ENCODE measurements at regions of chr20 and their contacts with region 1.

Region 1: GRCh38 chr20:45293041-45294002 is 13.3 kb upstream of the RBPJL start:
- DNase-seq: peak; percentile 89
- H3K4me3 ChIP-seq: peak overlapping the region; percentile 36 to 60 (median 50)
- H3K27ac ChIP-seq: peak overlapping the region; percentile 36 to 65 (median 48)
- H3K4me1 ChIP-seq: peaks cover 0 to 18% (median 10%) of the 10 kb centered on the region in 4 donors
- H3K27me3 ChIP-seq: peaks cover 21% of the 10 kb centered on the region
- CTCF ChIP-seq: peak; percentile 88 to 99 (median 97)
- EP300 ChIP-seq: no peak
- POLR2A ChIP-seq: no peak

Region 2: GRCh38 chr20:45011108-45011526 is 282.2 kb before region 1 on chr20:
- in situ Hi-C with region 1: loop called in 1 of 4 experiments (anchors 25 kb)
- intact Hi-C with region 1: no loop called
- DNase-seq: peak; percentile 65
- H3K4me3 ChIP-seq: no peak overlapping the region
- H3K27ac ChIP-seq: no peak overlapping the region
- H3K4me1 ChIP-seq: peaks cover 2 to 35% (median 4%) of the 10 kb centered on the region in 4 donors
- H3K27me3 ChIP-seq: no peaks in the 10 kb centered on the region
- CTCF ChIP-seq: peak; percentile 53 to 61 (median 60)
- EP300 ChIP-seq: no peak
- POLR2A ChIP-seq: no peak

Region 3: DNA sequence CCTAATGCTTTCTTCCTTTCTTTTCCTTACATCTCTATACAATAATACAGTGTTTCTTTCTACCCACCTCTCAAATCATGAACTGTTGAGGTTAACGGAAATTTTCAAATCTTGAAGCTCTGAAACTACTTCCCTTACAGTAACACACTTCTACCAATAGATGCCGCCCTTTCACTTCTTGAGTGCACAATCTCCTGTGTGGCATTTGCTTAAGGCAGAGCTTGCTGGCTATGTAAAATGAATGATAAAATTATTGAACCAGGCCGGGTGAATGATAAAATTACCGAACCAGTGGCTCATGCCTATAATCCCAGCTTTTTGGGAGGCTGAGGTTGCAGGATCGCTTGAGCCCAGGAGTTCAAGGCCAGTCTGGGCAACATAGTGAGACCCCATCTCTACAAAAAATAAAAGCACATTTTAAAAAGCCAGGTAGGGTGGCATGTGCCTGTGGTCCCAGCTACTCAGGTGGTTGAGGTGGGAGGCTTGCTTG is 249.2 kb before region 1 on chr20:
- in situ Hi-C with region 1: loop called in 1 of 4 experiments (anchors 25 kb)
- intact Hi-C with region 1: no loop called
- DNase-seq: peak; percentile 15
- H3K4me3 ChIP-seq: no peak overlapping the region
- H3K27ac ChIP-seq: no peak overlapping the region
- H3K4me1 ChIP-seq: peaks cover 3 to 27% (median 7%) of the 10 kb centered on the region in 4 donors
- H3K27me3 ChIP-seq: no peaks in the 10 kb centered on the region
- CTCF ChIP-seq: peak; percentile 74 to 86 (median 78)
- EP300 ChIP-seq: no peak
- POLR2A ChIP-seq: no peak

Region 4: DNA sequence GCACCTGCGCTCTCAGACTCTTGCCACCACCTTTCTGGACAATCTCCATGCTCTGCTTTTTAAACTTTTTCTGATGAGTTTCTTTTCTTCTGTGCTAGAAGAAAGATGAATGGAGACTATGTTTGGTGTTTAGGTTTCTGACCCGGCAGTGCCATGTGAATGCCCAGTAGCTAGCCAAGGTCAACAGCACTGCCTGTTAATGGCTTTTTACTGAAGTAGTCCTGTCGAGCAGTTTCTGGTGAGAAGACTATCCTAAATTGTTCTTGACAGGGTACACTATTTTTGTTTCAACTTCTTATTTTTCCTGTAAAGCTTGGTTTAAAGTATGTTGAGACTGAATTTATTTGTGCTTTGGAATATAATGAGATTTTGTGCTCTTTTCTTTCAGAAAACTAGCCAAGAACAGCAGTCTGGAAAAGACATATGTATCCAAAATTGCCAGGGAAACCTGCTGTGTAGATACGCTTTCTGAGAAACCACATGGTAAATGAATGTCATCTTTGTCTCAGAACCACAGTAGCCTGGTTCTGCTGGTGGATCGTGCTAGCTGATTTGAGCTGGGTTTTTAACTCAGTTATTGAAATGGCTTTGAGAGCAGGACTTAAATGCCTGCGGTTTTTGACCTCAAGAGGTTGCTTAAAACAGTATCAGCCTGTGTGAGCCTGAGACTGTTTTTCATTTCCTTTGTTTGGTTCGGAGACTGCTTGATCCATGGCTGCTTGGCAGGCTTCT is 240.5 kb before region 1 on chr20:
- in situ Hi-C with region 1: loop called in 1 of 4 experiments (anchors 25 kb)
- intact Hi-C with region 1: loop called (anchors 10 kb)
- DNase-seq: no peak
- H3K4me3 ChIP-seq: no peak overlapping the region
- H3K27ac ChIP-seq: peak overlapping the region in 3 of 4 donors; percentile 20 to 37 (median 37)
- H3K4me1 ChIP-seq: peaks cover 0 to 38% (median 8%) of the 10 kb centered on the region in 4 donors
- H3K27me3 ChIP-seq: no peaks in the 10 kb centered on the region
- CTCF ChIP-seq: no peak
- EP300 ChIP-seq: no peak
- POLR2A ChIP-seq: no peak

Region 5: DNA sequence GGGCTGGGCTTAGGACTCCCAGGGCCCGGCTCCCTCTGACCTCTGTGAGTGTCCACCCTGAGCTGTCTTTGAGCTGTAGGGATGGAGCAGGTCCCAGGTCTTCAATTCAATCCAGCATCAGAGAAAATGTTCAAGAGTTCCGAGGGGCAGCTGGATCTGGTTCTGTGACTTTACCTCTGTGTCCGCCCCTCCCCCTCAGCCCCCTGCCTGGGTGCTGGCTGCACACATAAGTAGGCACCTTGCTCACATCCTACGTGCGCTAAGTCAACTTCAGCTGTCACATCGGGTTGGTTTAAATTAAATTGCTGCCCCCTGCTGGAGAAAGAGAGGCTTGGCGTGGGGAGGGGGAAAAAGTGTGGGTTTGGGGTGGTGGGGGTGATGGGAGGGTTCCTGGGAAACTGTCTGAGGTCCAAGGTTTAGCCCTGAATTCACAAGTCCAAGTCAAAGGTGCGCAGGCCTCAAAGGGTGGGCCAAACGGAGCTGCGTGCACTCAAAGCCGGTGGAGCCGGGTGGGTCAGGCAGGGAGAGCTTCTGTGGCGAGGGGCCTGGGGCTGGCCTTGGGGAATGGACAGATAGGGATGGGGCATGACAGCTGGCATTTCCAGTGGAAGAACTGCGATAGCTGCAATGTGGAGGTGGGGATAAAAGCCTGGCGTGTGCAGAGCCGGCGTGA is 181.4 kb before region 1 on chr20:
- in situ Hi-C with region 1: loop called in 1 of 4 experiments (anchors 25 kb)
- intact Hi-C with region 1: no loop called
- DNase-seq: no peak
- H3K4me3 ChIP-seq: no peak overlapping the region
- H3K27ac ChIP-seq: no peak overlapping the region
- H3K4me1 ChIP-seq: no peaks in the 10 kb centered on the region
- H3K27me3 ChIP-seq: peaks cover 15% of the 10 kb centered on the region
- CTCF ChIP-seq: peak in 4 of 5 experiments; percentile 25 to 45 (median 30)
- EP300 ChIP-seq: no peak
- POLR2A ChIP-seq: no peak

Region 6: DNA sequence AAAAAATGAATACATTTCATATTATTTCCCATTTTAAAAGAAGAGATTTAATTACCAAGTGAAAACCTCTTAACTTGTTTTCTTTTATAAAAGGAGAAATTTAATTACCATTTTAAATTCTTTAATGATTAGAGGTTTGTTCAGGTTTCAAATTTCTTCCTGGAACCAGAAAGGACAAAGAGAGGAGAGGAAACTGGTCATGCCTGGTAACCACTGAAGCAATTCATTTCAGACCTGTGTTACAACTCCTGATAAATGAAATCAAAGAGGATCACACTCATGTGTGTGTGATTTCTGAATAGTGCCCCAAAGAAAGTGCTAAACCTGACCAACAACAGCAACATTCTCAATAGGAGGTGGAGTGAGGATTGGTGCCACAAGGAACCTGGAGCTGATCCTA is 26.3 kb before region 1 on chr20:
- in situ Hi-C with region 1: no loop called
- intact Hi-C with region 1: no loop called
- DNase-seq: no peak
- H3K4me3 ChIP-seq: no peak overlapping the region
- H3K27ac ChIP-seq: no peak overlapping the region
- H3K4me1 ChIP-seq: no peaks in the 10 kb centered on the region
- H3K27me3 ChIP-seq: peaks cover 17% of the 10 kb centered on the region
- CTCF ChIP-seq: no peak
- EP300 ChIP-seq: no peak
- POLR2A ChIP-seq: no peak

Measured in transverse colon (tissue), 4 donors.